ENCODE measurements at regions of chr4 and their contacts with region 1.

Region 1: DNA sequence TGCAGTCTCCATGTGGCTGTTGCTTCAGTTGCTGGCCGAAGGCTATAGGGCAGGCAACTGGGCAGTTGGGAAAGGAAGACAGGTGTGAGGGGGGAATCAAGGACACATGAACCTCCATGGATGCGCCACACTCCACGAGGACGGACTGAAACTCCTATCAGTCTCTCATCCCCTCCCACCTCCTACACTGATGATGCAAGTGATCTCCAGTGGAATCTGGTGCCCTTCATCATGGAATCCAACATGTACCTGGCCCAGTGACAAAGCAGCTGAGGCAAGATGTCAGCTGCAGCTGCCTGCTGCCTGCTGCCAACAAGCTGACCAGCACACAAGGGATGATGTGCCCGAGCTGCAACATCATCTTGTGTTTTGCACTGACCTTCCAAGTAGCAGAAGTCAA is 26.0 kb upstream of the MGST2 start:
- DNase-seq: no peak
- ATAC-seq: no peak
- H3K4me3 ChIP-seq: no peak overlapping the region
- H3K27ac ChIP-seq: no peak overlapping the region
- H3K4me1 ChIP-seq: no peaks in the 10 kb centered on the region
- H3K27me3 ChIP-seq: no peaks in the 10 kb centered on the region
- CTCF ChIP-seq: no peak

Region 2: GRCh38 chr4:139603576-139604387 is 35.9 kb before region 1 on chr4:
- intact Hi-C with region 1: loop called in 2 of 10 experiments (anchors 5 kb)
- DNase-seq: peak in 1 of 2 donors; percentile 56
- ATAC-seq: peak in 6 of 8 donors; percentile 48 to 70 (median 60)
- H3K4me3 ChIP-seq: no peak overlapping the region
- H3K27ac ChIP-seq: no peak overlapping the region
- H3K4me1 ChIP-seq: peaks cover 0 to 19% (median 6%) of the 10 kb centered on the region in 9 donors
- H3K27me3 ChIP-seq: no peaks in the 10 kb centered on the region
- CTCF ChIP-seq: peak; percentile 48 to 84 (median 72)

Region 3: GRCh38 chr4:139674875-139675550 is 35.4 kb after region 1 on chr4:
- intact Hi-C with region 1: no loop called
- DNase-seq: no peak
- ATAC-seq: peak in 6 of 8 donors; percentile 40 to 70 (median 53)
- H3K4me3 ChIP-seq: no peak overlapping the region
- H3K27ac ChIP-seq: peak overlapping the region in 3 of 10 donors; percentile 14 to 73 (median 18)
- H3K4me1 ChIP-seq: peaks cover 0 to 47% (median 23%) of the 10 kb centered on the region in 9 donors
- H3K27me3 ChIP-seq: no peaks in the 10 kb centered on the region
- CTCF ChIP-seq: no peak

Region 4: DNA sequence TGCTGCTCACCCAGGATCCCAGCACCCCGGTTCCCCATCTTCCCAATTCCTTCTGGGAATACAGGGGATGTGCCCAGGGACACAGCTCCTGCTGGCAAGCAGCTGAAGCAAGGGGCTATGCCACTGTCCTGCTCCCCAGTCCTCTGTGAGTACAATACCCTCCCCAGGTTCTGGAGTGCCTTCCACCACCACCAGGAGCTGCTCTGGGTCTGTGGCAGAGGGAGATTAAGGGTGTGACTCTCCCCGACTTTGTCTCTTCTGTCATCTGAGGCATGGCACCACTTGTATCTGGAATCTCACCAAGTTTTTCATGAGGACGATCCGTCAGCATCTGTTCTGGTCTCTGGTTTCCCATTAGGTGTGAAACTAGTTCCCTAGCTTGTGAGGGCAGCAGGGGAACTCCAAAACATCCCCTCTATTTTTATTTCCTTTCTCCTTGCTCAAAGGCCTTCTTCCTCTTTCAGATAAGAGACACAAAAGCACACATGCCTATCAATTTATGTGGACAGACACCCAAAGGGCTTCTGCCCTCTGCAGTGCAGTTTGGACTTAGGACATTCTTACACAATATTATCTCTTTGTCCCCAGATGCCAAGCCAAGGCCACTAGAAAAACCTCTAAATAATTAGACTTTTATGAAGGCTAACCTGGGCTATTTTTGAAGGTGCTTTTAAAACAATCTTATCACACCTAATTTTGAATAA is 52.8 kb after region 1 on chr4:
- intact Hi-C with region 1: no loop called
- DNase-seq: peak in 1 of 2 donors; percentile 42
- ATAC-seq: peak; percentile 59 to 88 (median 86)
- H3K4me3 ChIP-seq: no peak overlapping the region
- H3K27ac ChIP-seq: peak overlapping the region in 4 of 10 donors; percentile 31 to 61 (median 48)
- H3K4me1 ChIP-seq: peaks cover 3 to 37% (median 23%) of the 10 kb centered on the region in 9 donors
- H3K27me3 ChIP-seq: no peaks in the 10 kb centered on the region
- CTCF ChIP-seq: peak in 6 of 9 donors; percentile 16 to 57 (median 35)

Region 5: DNA sequence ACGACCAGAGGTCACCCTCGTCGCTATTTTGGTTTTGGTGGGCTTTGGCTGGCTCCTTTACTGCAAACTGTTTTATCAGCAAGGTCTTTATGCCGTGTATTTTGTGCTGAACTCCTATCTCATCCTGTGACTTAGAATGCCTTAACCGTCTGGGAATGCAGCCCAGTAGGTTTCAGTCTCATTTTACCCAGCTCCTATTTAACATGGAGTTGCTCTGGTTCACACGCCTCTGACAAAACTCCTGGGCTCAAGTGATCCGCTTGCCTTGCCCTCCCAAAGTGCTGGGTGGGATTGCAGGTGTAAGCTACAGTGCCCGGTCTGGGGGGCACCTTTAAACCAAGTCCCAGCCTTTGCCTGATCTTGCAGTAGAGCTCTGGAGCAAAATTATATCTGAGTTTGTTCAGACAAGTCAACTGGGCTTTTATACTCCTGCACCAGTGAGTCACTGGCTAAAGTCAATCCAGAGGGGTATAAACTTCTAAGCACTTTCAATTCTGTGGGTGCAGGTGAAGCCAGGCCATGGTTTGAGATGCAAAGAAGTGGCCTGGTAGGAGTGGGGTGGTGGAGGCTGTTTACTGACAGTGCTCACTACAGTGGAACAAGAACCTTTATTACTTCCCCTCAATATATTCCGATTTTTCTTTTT is 76.2 kb after region 1 on chr4:
- intact Hi-C with region 1: no loop called
- DNase-seq: no peak
- ATAC-seq: peak in 2 of 8 donors; percentile 36 to 39
- H3K4me3 ChIP-seq: no peak overlapping the region
- H3K27ac ChIP-seq: peak overlapping the region in 8 of 10 donors; percentile 16 to 67 (median 56)
- H3K4me1 ChIP-seq: peaks cover 0 to 49% (median 25%) of the 10 kb centered on the region in 9 donors
- H3K27me3 ChIP-seq: no peaks in the 10 kb centered on the region
- CTCF ChIP-seq: no peak